WTC11 (cell line): ENCODE measurements at regions of chr17 and their contacts with region 1.

Region 1: GRCh38 chr17:7167832-7168231 is 11.3 kb downstream of the ASGR1 start:
- DNase-seq: no peak
- ATAC-seq: no peak
- H3K4me3 Mint-ChIP-seq: no peak overlapping the region
- H3K27ac Mint-ChIP-seq: no peak overlapping the region
- H3K4me1 Mint-ChIP-seq: peaks cover 4% of the 10 kb centered on the region
- H3K27me3 Mint-ChIP-seq: no peaks in the 10 kb centered on the region; the same call in none of the 2 replicates
- CTCF ChIP-seq: no peak

Region 2: DNA sequence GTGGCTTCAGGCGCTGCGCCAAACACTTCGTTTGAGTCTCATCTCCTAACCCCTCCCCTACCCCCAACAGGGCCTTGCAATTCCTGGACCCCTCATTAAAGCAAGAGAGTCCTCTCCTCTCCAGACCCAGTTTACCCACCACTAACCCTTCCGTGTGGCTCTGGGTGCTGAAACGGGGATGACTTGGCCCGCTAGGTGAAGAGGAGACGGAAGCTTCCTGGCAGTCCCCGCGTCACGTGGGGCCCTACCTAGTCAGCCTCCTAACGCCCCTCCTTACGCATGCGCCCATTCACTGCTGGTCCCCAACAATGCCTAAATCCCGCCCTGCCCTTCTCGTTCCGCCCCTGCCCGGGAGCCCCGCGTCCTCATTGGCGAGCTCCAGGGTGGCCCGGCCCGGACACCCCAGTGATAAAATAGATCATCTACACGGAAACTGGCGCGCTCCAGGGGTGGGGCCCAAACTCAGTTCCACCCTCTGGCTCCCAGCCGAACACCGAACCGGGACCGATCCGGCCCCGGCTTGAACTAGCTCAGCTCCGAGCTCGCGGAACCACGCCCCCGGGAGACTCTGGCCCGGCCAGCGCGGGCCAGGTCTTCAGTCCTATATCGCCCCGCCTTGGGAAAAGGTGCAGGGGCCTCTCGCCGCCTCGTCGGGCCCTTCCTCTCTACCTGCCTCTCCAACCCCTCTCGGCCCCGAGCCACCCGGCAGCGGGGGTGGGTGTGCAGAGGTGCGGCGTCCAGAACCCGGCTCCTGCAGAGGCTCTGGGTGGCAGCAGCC is 132.1 kb before region 1 on chr17 and contains the start of gene SLC16A13:
- CTCF ChIA-PET with region 1: interaction called, 10 read pairs
- POLR2A ChIA-PET with region 1: no interaction called
- DNase-seq: peak; percentile 94
- ATAC-seq: peak; percentile 92
- H3K4me3 Mint-ChIP-seq: peak within 1 kb of the TSS; percentile 94
- H3K27ac Mint-ChIP-seq: peak within 1 kb of the TSS; percentile 87; the same call in 1 of the 2 replicates
- H3K4me1 Mint-ChIP-seq: peaks cover 20% of the 10 kb centered on the region
- H3K27me3 Mint-ChIP-seq: peaks cover 20% of the 10 kb centered on the region
- CTCF ChIP-seq: no peak
- total RNA-seq, gene SLC16A13: 5.2 to 7.1 TPM (median 6.9 TPM) in 3 replicates

Region 3: GRCh38 chr17:7141824-7142223 is 26.0 kb before region 1 on chr17:
- CTCF ChIA-PET with region 1: interaction called, 33 read pairs
- POLR2A ChIA-PET with region 1: interaction called, 4 read pairs
- DNase-seq: no peak
- ATAC-seq: no peak
- H3K4me3 Mint-ChIP-seq: no peak overlapping the region
- H3K27ac Mint-ChIP-seq: peak overlapping the region; percentile 1; the same call in 1 of the 2 replicates
- H3K4me1 Mint-ChIP-seq: peaks cover 61% of the 10 kb centered on the region
- H3K27me3 Mint-ChIP-seq: peaks cover 9% of the 10 kb centered on the region
- CTCF ChIP-seq: no peak

Region 4: DNA sequence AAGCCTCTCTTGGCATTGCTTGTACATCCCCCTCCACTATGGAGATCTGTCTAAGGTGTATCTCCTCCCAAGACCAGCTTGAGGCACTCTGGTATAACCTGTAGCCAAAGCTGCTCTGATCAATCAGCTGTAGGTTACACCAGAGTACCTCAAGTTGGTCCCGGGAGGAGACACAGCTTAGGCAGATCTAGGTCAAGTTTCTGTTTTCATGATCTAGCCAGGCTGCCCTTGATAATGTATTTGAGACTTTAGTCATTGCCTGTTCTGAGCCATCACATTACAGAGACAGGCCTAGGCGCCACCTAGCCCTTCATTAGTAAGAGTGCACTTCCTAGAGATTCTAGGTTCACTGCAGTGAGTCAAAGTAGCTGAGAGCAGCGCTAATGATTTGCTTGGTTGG is 20.1 kb before region 1 on chr17:
- CTCF ChIA-PET with region 1: interaction called, 11 read pairs
- POLR2A ChIA-PET with region 1: no interaction called
- DNase-seq: no peak
- ATAC-seq: no peak
- H3K4me3 Mint-ChIP-seq: no peak overlapping the region
- H3K27ac Mint-ChIP-seq: no peak overlapping the region
- H3K4me1 Mint-ChIP-seq: peaks cover 17% of the 10 kb centered on the region
- H3K27me3 Mint-ChIP-seq: peaks cover 4% of the 10 kb centered on the region
- CTCF ChIP-seq: no peak